ENCODE measurements at regions of chr3 and their contacts with region 1.

Region 1: GRCh38 chr3:23945903-23946751 is 1.0 kb downstream of the NR1D2 start:
- DNase-seq: peak; percentile 98
- ATAC-seq: peak; percentile 76
- H3K4me3 Mint-ChIP-seq: peak overlapping the region; percentile 80
- H3K27ac Mint-ChIP-seq: peak overlapping the region; percentile 93
- H3K4me1 Mint-ChIP-seq: peaks cover 43% of the 10 kb centered on the region
- H3K27me3 Mint-ChIP-seq: peaks cover 10% of the 10 kb centered on the region

Region 2: DNA sequence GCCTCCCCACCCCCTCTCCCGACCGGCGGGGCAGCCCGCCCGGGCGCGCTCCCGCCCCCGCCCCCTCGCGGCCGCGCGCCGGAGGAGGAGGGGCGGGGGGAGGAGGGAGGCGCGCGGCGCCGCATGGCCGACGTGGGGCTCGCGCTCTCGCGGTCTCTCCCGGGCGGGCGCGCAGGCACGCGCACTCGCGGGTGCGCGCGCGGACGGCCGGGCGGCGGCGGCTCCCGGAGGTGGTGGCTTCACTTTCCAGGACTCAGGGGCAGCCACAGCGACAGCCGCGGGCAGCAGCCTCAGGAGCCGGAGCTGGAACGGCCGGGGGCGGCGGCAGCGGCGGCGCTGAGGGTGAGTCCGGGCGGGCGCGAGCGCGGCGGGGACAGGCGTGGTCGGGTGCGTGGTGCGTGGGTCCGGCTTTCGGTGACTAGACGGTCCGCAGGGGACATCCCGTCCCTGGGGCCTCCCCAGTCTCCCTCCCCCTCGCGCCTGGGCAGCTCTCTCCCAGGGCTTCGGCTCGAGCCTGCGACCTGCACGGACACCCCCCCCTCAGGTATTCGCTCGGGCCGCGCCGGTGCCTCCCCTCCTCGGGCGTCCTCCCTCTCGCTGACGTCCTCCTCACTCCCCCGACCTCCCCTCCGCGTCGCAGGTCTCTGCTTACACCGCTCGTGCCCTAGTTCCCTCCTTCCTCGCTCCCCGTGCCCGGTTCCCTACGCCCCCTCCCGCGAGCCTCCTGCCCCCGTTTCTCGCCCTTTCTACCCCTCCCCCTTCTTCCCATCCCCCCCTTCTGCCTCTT is 743.0 kb before region 1 on chr3 and contains the start of gene UBE2E2:
- CTCF ChIA-PET with region 1: no interaction called
- POLR2A ChIA-PET with region 1: no interaction called
- intact Hi-C with region 1: loop called (anchors 1 to 2 kb)
- DNase-seq: peak; percentile 78
- ATAC-seq: peak; percentile 62
- H3K4me3 Mint-ChIP-seq: peak within 1 kb of the TSS; percentile 83
- H3K27ac Mint-ChIP-seq: peak within 1 kb of the TSS; percentile 76
- H3K4me1 Mint-ChIP-seq: peaks cover 23% of the 10 kb centered on the region
- H3K27me3 Mint-ChIP-seq: peaks cover 11% of the 10 kb centered on the region
- total RNA-seq, gene UBE2E2: 13.5 to 18.2 TPM

Region 3: GRCh38 chr3:23288286-23288685 is 657.8 kb before region 1 on chr3:
- CTCF ChIA-PET with region 1: no interaction called
- POLR2A ChIA-PET with region 1: no interaction called
- intact Hi-C with region 1: no loop called
- DNase-seq: no peak
- ATAC-seq: no peak
- H3K4me3 Mint-ChIP-seq: no peak overlapping the region
- H3K27ac Mint-ChIP-seq: no peak overlapping the region
- H3K4me1 Mint-ChIP-seq: no peaks in the 10 kb centered on the region
- H3K27me3 Mint-ChIP-seq: no peaks in the 10 kb centered on the region

Region 4: DNA sequence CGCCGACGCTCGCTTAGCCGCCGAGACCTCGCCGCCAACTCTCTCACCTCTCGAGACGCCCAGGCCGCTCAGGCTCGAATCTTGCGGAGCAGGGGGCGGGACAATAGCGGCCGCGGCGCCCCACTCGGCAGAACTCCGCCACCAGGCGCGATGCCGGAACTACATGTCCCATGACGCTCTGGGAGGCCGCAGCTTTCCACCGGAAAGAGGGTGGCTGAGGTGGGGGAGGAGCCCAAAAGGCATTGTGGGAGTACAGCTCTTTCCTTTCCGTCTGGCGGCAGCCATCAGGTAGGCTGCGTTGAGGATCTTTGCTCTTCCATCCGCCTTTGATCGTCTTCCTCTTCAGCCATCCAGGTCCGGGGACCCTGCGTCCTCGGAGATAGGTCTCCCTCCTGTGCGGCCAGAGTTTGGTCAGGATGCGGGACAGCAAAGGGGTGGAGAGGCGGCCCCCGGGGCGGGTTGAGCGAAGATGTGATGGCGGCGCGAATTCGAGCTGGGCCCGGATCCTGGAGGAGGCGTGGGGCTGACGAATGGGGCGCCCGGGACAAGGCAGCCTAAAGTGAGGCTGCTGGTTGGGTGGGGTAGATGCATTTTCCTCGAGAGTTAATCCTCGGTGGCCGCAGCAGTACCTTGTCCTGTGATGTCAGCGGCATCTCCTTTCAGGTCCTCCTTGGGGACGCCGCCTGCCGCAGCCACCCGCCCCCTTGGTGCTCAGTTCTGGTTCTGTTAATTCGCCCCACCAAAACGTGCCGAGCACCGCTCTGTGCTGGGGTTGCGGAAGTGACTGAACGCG is 29.0 kb before region 1 on chr3 and contains the starts of genes NKIRAS1 and RPL15:
- CTCF ChIA-PET with region 1: interaction called, 5 read pairs
- POLR2A ChIA-PET with region 1: interaction called, 25 read pairs
- intact Hi-C with region 1: loop called (anchors 1 kb)
- DNase-seq: peak; percentile 98
- ATAC-seq: peak; percentile 94
- H3K4me3 Mint-ChIP-seq: peak within 1 kb of the TSS; percentile 99
- H3K27ac Mint-ChIP-seq: peak within 1 kb of the TSS; percentile 99
- H3K4me1 Mint-ChIP-seq: peaks cover 43% of the 10 kb centered on the region
- H3K27me3 Mint-ChIP-seq: peaks cover 4% of the 10 kb centered on the region
- total RNA-seq, gene NKIRAS1: 2.8 to 3.5 TPM
- total RNA-seq, gene RPL15: 2,605 to 3,065 TPM

Region 5: GRCh38 chr3:24154013-24154695 is 208.0 kb after region 1 on chr3:
- CTCF ChIA-PET with region 1: no interaction called
- POLR2A ChIA-PET with region 1: no interaction called
- intact Hi-C with region 1: loop called in 1 of 2 experiments (anchors 5 kb)
- DNase-seq: no peak
- ATAC-seq: peak; percentile 80
- H3K4me3 Mint-ChIP-seq: no peak overlapping the region
- H3K27ac Mint-ChIP-seq: peak overlapping the region; percentile 7
- H3K4me1 Mint-ChIP-seq: peaks cover 28% of the 10 kb centered on the region
- H3K27me3 Mint-ChIP-seq: peaks cover 7% of the 10 kb centered on the region

Region 6: DNA sequence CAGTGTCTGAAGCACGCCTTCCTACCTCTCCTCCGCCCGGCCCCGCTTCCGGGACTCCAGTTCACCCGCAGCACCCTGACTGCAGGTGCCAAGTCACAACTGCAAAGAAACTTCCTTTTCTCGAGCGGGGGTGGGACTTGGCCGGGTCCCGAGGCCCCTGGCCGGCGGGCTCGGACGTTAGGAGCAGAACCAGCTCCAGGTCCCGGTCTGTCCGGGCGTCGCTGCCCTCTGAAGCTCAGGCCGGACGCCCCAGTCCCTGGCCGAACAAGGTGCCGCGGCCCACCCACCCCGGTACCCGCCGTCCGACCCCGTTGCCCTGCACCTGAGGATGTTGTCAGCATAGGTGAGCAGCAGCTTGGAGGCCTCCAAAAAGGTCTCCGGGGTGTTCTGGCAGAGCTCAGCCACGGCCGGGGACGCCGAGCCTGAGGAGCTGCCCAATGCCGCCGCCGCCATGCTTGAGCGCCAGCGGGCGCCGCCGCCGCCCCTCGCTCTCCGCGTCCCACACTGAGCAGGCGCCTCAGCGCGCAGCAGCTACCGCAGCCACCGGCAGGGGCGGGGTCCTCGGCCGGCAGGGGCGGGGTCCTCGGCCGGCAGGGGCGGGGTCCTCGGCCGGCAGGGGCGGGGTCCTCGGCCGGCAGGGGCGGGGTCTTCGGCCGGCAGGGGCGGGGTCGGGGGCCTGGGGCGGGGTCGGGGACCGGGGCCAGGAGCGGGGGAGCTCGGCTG is 1837.0 kb after region 1 on chr3 and contains the start of gene NGLY1:
- CTCF ChIA-PET with region 1: no interaction called
- POLR2A ChIA-PET with region 1: no interaction called
- intact Hi-C with region 1: loop called (anchors 5 to 10 kb)
- DNase-seq: peak; percentile 92
- ATAC-seq: peak; percentile 93
- H3K4me3 Mint-ChIP-seq: peak within 1 kb of the TSS; percentile 92
- H3K27ac Mint-ChIP-seq: peak within 1 kb of the TSS; percentile 90
- H3K4me1 Mint-ChIP-seq: peaks cover 54% of the 10 kb centered on the region
- H3K27me3 Mint-ChIP-seq: no peaks in the 10 kb centered on the region
- total RNA-seq, gene NGLY1: 86.1 to 135 TPM